PC-9 (cell line): ENCODE measurements at regions of chr15 and their contacts with region 1.

Region 1: DNA sequence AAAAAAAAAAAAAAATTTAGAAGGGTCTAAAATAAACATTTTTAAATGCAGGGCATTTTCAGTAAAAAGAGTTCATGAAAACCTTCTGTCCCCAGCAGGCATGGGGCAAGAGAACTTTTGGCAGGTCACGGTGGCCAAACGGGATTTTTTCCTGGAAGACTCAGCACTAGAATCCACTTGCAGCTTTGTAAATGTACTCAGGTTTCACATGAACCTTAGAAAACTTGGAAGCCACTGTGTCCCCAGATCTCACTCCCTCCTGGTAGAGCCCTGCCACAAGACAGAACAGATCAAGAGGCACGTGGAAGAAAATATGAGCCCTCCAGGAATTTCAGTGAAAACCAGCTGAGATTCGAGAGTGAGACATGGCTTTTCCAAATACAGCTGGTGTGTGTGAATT is 2.1 kb upstream of the GNB5 start:
- DNase-seq: no peak
- H3K4me3 ChIP-seq: no peak overlapping the region
- H3K27ac ChIP-seq: no peak overlapping the region
- H3K4me1 ChIP-seq: no peaks in the 10 kb centered on the region
- H3K27me3 ChIP-seq: no peaks in the 10 kb centered on the region
- CTCF ChIP-seq: no peak

Region 2: GRCh38 chr15:52155878-52156277 is 37.4 kb before region 1 on chr15:
- CTCF ChIA-PET with region 1: no interaction called
- POLR2A ChIA-PET with region 1: interaction called, 23 read pairs
- intact Hi-C with region 1: no loop called
- DNase-seq: peak in 1 of 2 experiments; percentile 32
- H3K4me3 ChIP-seq: no peak overlapping the region
- H3K27ac ChIP-seq: no peak overlapping the region
- H3K4me1 ChIP-seq: no peaks in the 10 kb centered on the region
- H3K27me3 ChIP-seq: no peaks in the 10 kb centered on the region
- CTCF ChIP-seq: no peak